Natural killer cell (primary cell): ENCODE measurements at regions of chr19 and their contacts with region 1.

Region 1: GRCh38 chr19:2016041-2016807 is 710 bp upstream of the BTBD2 start:
- DNase-seq: peak in 1 of 2 donors; percentile 79
- ATAC-seq: peak in 2 of 3 donors; percentile 66 to 68
- H3K4me3 ChIP-seq: no peak overlapping the region
- H3K4me3 Mint-ChIP-seq: peak overlapping the region; percentile 77
- H3K27ac ChIP-seq: peak overlapping the region; percentile 48
- H3K27ac Mint-ChIP-seq: peak overlapping the region in 1 of 2 donors; percentile 57
- H3K4me1 ChIP-seq: peaks cover 23% of the 10 kb centered on the region
- H3K4me1 Mint-ChIP-seq: peaks cover 15 to 40% of the 10 kb centered on the region in 2 donors
- H3K27me3 ChIP-seq: no peaks in the 10 kb centered on the region
- H3K27me3 Mint-ChIP-seq: no peaks in the 10 kb centered on the region
- CTCF ChIP-seq: no peak

Region 2: DNA sequence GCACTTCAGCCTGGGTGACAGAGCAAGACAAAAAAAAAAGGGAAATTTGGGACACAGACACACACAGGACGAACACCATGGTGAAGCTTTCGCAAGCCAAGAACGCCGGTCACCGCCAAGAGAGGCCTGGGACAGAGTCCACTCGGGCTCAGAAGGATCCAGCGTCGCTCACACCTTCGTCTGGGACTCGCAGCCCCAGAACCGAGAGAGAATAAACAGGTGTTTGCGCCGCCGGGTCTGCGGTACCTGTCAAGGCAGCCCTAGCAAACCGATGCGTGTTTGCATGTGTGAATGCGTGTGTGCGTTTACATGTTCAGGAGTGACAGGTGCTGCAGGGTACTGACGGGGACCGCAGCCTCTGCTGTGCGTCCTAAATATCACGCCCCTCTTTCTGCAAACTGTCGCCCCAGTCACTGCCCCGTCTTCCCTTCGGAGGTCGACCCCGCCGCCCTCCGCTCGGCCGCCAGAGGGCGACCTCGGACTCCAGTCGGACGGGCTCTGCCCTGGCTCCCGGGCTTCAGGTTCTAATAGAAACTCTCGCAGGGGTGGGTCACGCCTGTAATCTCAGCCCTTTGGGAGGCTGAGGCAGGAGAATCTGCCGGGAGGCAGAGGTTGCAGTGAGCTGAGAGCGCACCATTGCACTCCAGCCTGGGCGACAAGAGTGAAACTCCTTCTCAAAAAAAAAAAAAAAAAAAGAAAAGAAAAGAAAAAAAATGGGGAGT is 87.0 kb before region 1 on chr19:
- intact Hi-C with region 1: loop called (anchors 5 kb)
- DNase-seq: peak; percentile 87 to 89
- ATAC-seq: peak; percentile 94
- H3K4me3 ChIP-seq: peak overlapping the region; percentile 42
- H3K4me3 Mint-ChIP-seq: peak overlapping the region; percentile 92
- H3K27ac ChIP-seq: no peak overlapping the region
- H3K27ac Mint-ChIP-seq: peak overlapping the region; percentile 68 to 74
- H3K4me1 ChIP-seq: peaks cover 37% of the 10 kb centered on the region
- H3K4me1 Mint-ChIP-seq: peaks cover 9 to 32% of the 10 kb centered on the region in 2 donors
- H3K27me3 ChIP-seq: no peaks in the 10 kb centered on the region
- H3K27me3 Mint-ChIP-seq: peaks cover 0 to 3% of the 10 kb centered on the region in 2 donors
- CTCF ChIP-seq: peak; percentile 93

Region 3: GRCh38 chr19:2050991-2051772 is 35.0 kb after region 1 on chr19 and contains the start of gene MKNK2:
- intact Hi-C with region 1: loop called (anchors 5 kb)
- DNase-seq: peak; percentile 97
- ATAC-seq: peak; percentile 81 to 93 (median 84)
- H3K4me3 ChIP-seq: peak within 1 kb of the TSS; percentile 91
- H3K4me3 Mint-ChIP-seq: peak within 1 kb of the TSS; percentile 85
- H3K27ac ChIP-seq: peak within 1 kb of the TSS; percentile 95
- H3K27ac Mint-ChIP-seq: peak within 1 kb of the TSS; percentile 82 to 89
- H3K4me1 ChIP-seq: peaks cover 77% of the 10 kb centered on the region
- H3K4me1 Mint-ChIP-seq: peaks cover 10 to 42% of the 10 kb centered on the region in 2 donors
- H3K27me3 ChIP-seq: no peaks in the 10 kb centered on the region
- H3K27me3 Mint-ChIP-seq: no peaks in the 10 kb centered on the region
- CTCF ChIP-seq: peak; percentile 33
- total RNA-seq, gene MKNK2: 259 to 389 (median 322) TPM

Region 4: DNA sequence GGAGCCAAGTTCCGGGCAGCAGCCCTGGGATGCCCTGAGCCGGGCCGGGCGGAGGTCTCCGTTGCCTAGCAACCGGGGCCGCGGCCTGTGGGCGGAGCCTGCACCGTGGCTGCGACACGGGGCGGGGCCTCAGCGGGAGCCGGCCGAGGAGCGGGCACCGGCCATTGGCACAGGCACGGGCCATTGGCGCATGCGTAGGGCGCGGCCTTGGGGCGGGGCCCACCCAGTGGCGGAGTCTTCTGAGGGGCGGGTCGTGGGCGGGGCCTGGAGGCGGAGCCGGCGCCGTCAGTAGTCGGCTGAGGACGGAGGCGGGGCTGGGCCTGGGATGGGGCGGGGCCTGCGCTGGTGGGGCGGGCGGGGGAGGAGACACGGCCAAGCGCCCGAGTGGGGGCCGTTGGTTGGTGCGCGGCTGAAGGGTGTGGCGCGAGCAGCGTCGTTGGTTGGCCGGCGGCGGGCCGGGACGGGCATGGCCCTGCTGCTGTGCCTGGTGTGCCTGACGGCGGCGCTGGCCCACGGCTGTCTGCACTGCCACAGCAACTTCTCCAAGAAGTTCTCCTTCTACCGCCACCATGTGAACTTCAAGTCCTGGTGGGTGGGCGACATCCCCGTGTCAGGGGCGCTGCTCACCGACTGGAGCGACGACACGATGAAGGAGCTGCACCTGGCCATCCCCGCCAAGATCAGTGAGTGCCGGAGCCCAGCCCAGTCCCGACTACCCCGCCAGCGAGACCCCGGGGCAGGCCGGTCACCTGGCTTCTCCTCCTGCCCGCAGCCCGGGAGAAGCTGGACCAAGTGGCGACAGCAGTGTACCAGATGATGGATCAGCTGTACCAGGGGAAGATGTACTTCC is 80.5 kb after region 1 on chr19 and contains the start of gene IZUMO4:
- intact Hi-C with region 1: loop called (anchors 2 kb)
- DNase-seq: peak; percentile 99
- ATAC-seq: peak; percentile 80 to 92 (median 83)
- H3K4me3 ChIP-seq: peak within 1 kb of the TSS; percentile 69
- H3K4me3 Mint-ChIP-seq: peak within 1 kb of the TSS; percentile 98
- H3K27ac ChIP-seq: peak within 1 kb of the TSS; percentile 87
- H3K27ac Mint-ChIP-seq: peak within 1 kb of the TSS; percentile 88 to 90
- H3K4me1 ChIP-seq: peaks cover 52% of the 10 kb centered on the region
- H3K4me1 Mint-ChIP-seq: peaks cover 19 to 35% of the 10 kb centered on the region in 2 donors
- H3K27me3 ChIP-seq: no peaks in the 10 kb centered on the region
- H3K27me3 Mint-ChIP-seq: no peaks in the 10 kb centered on the region
- CTCF ChIP-seq: peak; percentile 25
- total RNA-seq, gene IZUMO4: 3.3 to 7.6 (median 7.1) TPM

Region 5: GRCh38 chr19:2236314-2237050 is 220.3 kb after region 1 on chr19 and contains the starts of genes PLEKHJ1 and SF3A2:
- intact Hi-C with region 1: no loop called
- DNase-seq: peak; percentile 100
- ATAC-seq: peak; percentile 80 to 92 (median 81)
- H3K4me3 ChIP-seq: peak within 1 kb of the TSS; percentile 65
- H3K4me3 Mint-ChIP-seq: peak within 1 kb of the TSS; percentile 94
- H3K27ac ChIP-seq: peak within 1 kb of the TSS; percentile 99
- H3K27ac Mint-ChIP-seq: peak within 1 kb of the TSS; percentile 98 to 100
- H3K4me1 ChIP-seq: peaks cover 66% of the 10 kb centered on the region
- H3K4me1 Mint-ChIP-seq: peaks cover 56 to 67% of the 10 kb centered on the region in 2 donors
- H3K27me3 ChIP-seq: no peaks in the 10 kb centered on the region
- H3K27me3 Mint-ChIP-seq: no peaks in the 10 kb centered on the region
- CTCF ChIP-seq: peak; percentile 96
- total RNA-seq, gene PLEKHJ1: 36.7 to 45.8 (median 44.7) TPM
- total RNA-seq, gene SF3A2: 143 to 165 (median 147) TPM